GM12878 (cell line): ENCODE measurements at regions of chr5 and their contacts with region 1.

Region 1: DNA sequence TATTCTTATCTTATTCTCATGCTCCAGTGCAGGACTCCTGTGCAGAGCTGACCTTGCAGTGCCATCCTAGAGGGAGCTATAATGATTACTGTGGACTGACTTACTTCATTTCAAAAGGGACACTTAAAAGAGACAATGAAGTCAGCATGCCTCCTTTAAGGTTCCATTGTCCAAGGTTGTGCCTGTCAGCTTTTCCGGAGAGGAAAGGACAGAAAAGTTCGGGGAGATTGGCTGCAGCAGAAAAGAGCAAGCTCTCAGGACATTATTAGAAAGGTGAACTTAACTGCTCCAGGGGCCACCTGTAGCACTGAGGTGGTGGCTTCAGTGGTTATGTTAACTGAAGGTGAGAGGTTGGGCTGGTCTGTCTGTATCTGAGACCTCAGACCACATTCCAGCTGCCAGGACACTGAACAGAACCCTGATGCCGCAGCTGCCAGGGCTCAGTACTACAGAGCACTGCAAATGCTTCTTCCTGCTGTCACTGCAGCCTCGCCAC is 112.9 kb downstream of the ST8SIA4 start:
- DNase-seq: no peak
- ATAC-seq: peak; percentile 80
- H3K4me3 ChIP-seq: no peak overlapping the region
- H3K27ac ChIP-seq: no peak overlapping the region
- H3K4me1 ChIP-seq: peaks cover 12% of the 10 kb centered on the region
- H3K27me3 ChIP-seq: no peaks in the 10 kb centered on the region
- CTCF ChIP-seq: peak in 1 of 3 experiments; percentile 31; a peak in 2 of 6 replicates
- EP300 ChIP-seq: no peak
- POLR2A ChIP-seq: no peak
- RAD21 ChIP-seq: no peak

Region 2: DNA sequence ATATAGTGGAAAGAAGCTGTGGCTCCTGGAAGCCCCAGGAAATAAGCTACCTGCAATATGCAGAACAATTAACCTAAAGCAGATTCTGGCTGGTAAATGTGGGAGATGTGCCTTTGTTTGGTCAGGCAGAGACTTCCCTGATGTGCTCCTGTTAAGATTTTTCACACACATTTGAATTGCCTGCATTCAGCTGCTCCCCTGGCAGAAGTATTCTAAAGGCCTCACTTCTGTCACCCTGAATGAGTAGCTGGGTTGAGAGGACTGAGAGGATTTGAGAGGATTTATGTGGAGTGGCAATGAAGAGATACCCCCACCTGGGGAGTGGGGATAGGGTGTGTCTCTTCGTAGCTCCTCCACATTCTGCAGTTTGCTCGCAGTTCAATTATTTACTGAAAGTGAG is 17.7 kb before region 1 on chr5:
- CTCF ChIA-PET with region 1: interaction called, 12 read pairs
- POLR2A ChIA-PET with region 1: interaction called, 5 read pairs
- RAD21 ChIA-PET with region 1: interaction called, 44 read pairs
- SMC1A ChIA-PET with region 1: interaction called, 81 read pairs
- in situ Hi-C with region 1: no loop called
- intact Hi-C with region 1: no loop called
- DNase-seq: no peak
- ATAC-seq: no peak; the same call in 2 of the 3 replicates
- H3K4me3 ChIP-seq: no peak overlapping the region
- H3K27ac ChIP-seq: no peak overlapping the region
- H3K4me1 ChIP-seq: peaks cover 10% of the 10 kb centered on the region
- H3K27me3 ChIP-seq: no peaks in the 10 kb centered on the region
- CTCF ChIP-seq: no peak
- EP300 ChIP-seq: no peak
- POLR2A ChIP-seq: no peak
- RAD21 ChIP-seq: no peak

Region 3: GRCh38 chr5:100803397-100803796 is 13.2 kb after region 1 on chr5:
- CTCF ChIA-PET with region 1: interaction called, 9 read pairs
- POLR2A ChIA-PET with region 1: interaction called, 4 read pairs
- RAD21 ChIA-PET with region 1: interaction called, 3 read pairs
- SMC1A ChIA-PET with region 1: interaction called, 21 read pairs
- in situ Hi-C with region 1: no loop called
- intact Hi-C with region 1: no loop called
- DNase-seq: no peak
- ATAC-seq: no peak
- H3K4me3 ChIP-seq: no peak overlapping the region
- H3K27ac ChIP-seq: no peak overlapping the region
- H3K4me1 ChIP-seq: no peaks in the 10 kb centered on the region
- H3K27me3 ChIP-seq: no peaks in the 10 kb centered on the region
- CTCF ChIP-seq: no peak
- EP300 ChIP-seq: no peak
- POLR2A ChIP-seq: no peak
- RAD21 ChIP-seq: no peak

Region 4: DNA sequence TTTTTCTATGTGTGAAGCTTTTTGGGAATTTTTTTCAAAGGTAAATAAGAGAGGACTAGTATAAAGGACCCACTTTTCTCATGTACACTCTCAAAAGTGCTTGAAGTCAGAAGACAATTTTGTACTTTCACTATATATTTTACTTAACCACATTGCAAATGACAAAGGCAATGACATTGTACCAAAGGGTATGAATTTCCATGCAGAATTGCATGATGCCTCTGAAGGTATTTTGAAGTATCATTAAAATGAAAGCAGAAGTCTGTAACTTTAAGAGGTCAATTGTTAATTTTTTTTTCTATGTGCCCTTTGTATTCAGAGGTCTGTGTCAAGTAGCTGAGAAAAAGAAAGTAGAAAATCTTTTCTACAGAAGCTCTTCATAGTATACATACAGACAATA is 28.1 kb after region 1 on chr5:
- CTCF ChIA-PET with region 1: interaction called, 32 read pairs
- POLR2A ChIA-PET with region 1: interaction called, 4 read pairs
- RAD21 ChIA-PET with region 1: interaction called, 7 read pairs
- SMC1A ChIA-PET with region 1: interaction called, 63 read pairs
- in situ Hi-C with region 1: no loop called
- intact Hi-C with region 1: no loop called
- DNase-seq: no peak
- ATAC-seq: peak; percentile 67
- H3K4me3 ChIP-seq: no peak overlapping the region
- H3K27ac ChIP-seq: no peak overlapping the region; the same call in 1 of the 2 replicates
- H3K4me1 ChIP-seq: peaks cover 4% of the 10 kb centered on the region; the same call in 1 of the 2 replicates
- H3K27me3 ChIP-seq: no peaks in the 10 kb centered on the region
- CTCF ChIP-seq: no peak
- EP300 ChIP-seq: no peak
- POLR2A ChIP-seq: no peak
- RAD21 ChIP-seq: no peak

Region 5: GRCh38 chr5:101278011-101278687 is 487.9 kb after region 1 on chr5:
- CTCF ChIA-PET with region 1: no interaction called
- POLR2A ChIA-PET with region 1: no interaction called
- RAD21 ChIA-PET with region 1: no interaction called
- SMC1A ChIA-PET with region 1: no interaction called
- in situ Hi-C with region 1: no loop called
- intact Hi-C with region 1: no loop called
- DNase-seq: no peak
- ATAC-seq: no peak
- H3K4me3 ChIP-seq: no peak overlapping the region
- H3K27ac ChIP-seq: no peak overlapping the region
- H3K4me1 ChIP-seq: no peaks in the 10 kb centered on the region
- H3K27me3 ChIP-seq: no peaks in the 10 kb centered on the region
- CTCF ChIP-seq: no peak
- EP300 ChIP-seq: no peak
- POLR2A ChIP-seq: no peak
- RAD21 ChIP-seq: no peak